Uterus (tissue), 4 donors: ENCODE measurements at regions of chr7 and their contacts with region 1.

Region 1: DNA sequence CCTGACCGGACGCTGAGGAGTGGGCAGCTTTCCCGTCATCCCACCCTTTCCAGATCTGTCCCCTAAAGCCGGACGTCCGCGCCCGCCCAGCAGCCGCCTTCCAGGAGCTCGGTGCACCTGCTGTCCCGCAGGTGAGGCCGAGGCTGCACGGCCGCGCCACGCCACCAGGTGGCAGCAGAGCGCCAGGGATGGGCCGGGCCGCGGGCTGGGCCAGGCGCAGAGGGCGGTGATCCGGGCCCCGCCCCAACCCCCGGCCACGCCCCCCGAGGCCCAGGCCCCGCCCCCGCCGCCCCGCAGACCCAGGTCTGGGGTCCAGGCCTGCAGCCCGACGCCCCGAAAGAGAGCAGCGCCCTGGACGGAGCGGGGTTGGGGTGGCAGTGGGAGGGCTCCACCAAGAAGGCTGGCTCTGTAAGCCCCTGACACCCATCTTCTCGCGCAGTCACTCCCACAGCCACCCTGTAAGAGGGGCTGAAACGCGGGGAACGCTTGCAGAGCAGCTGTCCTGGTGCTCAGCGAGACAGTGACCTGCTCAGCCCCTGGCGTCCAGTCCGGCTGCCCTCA is 32.2 kb downstream of the FOXL3 start:
- DNase-seq: peak; percentile 46 to 75
- H3K4me3 ChIP-seq: peak overlapping the region in 1 of 2 donors; percentile 13
- H3K27ac ChIP-seq: no peak overlapping the region
- H3K4me1 ChIP-seq: no peaks in the 10 kb centered on the region
- H3K27me3 ChIP-seq: no peaks in the 10 kb centered on the region
- CTCF ChIP-seq: peak; percentile 84 to 98 (median 93)
- POLR2A ChIP-seq: no peak

Region 2: GRCh38 chr7:264541-265191 is 57.5 kb before region 1 on chr7:
- intact Hi-C with region 1: no loop called
- DNase-seq: no peak
- H3K4me3 ChIP-seq: no peak overlapping the region
- H3K27ac ChIP-seq: no peak overlapping the region
- H3K4me1 ChIP-seq: no peaks in the 10 kb centered on the region
- H3K27me3 ChIP-seq: no peaks in the 10 kb centered on the region
- CTCF ChIP-seq: no peak
- POLR2A ChIP-seq: no peak

Region 3: DNA sequence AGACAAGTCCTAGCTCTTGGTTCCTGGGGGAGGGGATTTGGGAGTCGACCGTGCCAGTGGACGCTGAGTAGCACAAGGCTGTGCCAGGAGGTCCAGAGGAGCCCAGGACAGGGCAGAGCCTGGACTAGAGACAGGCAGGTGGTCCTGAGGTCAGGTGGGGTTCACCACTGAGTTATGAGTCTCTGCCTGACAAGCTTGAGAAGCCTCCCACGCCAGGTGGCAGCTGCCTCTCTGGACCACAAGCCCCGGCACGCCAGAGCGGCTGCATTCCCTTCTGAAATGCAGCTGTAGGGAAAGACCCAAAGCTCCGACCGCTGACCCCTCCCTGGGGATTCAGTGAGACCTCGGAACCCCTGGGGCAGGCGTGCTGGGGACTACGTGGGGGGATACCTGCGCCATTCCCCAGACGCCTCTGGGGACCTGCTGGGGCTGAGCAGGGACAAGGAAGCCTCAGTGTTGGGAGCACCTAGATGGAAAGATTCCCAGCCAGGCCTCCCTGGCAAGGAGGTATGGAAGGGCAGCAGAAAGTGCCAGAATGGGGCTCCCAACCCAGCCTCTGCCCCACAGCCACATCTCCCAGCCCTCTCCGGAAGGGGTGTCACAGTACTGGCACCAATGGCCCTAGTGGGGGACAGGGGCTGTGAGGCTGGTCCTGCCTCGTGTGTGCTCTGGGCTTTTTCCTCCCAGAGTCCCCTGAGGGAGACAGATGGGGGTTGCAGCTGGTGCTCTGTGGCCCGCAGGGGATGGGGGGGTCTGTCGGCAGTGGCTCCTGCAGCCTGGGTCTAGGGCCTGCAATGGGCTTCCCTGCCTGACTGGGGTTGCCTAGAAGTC is 168.5 kb after region 1 on chr7:
- intact Hi-C with region 1: no loop called
- DNase-seq: no peak
- H3K4me3 ChIP-seq: no peak overlapping the region
- H3K27ac ChIP-seq: no peak overlapping the region
- H3K4me1 ChIP-seq: no peaks in the 10 kb centered on the region
- H3K27me3 ChIP-seq: no peaks in the 10 kb centered on the region
- CTCF ChIP-seq: no peak
- POLR2A ChIP-seq: no peak

Region 4: GRCh38 chr7:636396-636795 is 314.2 kb after region 1 on chr7:
- intact Hi-C with region 1: loop called (anchors 10 kb)
- DNase-seq: no peak
- H3K4me3 ChIP-seq: no peak overlapping the region
- H3K27ac ChIP-seq: no peak overlapping the region
- H3K4me1 ChIP-seq: no peaks in the 10 kb centered on the region
- H3K27me3 ChIP-seq: no peaks in the 10 kb centered on the region
- CTCF ChIP-seq: peak in 1 of 4 experiments; percentile 31
- POLR2A ChIP-seq: no peak